ENCODE measurements at regions of chr15 and their contacts with region 1.

Region 1: DNA sequence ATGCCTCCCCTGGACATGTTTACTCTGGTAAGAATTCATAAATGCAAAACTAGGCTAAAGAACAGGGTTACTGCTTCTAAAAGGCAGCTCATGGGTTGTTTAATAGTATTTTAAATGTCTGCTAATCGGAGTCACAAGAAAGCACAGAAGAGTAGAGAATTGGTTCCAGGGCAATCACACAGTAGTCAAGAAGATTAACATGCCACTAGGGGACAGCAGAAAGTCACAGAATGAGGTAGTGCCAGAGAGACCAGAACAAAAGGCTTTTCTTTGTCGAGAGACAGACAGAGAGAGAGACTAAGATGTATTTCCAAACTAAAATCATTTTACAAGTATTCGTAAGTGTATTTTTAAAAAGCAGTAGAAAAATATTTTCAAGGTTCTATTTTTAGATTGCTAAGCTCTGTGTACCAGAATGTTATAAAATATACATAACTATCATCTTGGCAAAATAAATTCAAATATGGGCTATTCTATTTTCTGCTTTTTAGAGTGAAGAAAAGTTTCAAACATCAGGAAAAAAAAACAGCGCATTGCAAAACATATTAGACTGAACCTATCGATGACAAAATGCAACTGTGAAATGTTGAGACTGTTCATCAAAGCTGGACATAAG is 78.3 kb upstream of the CDIN1 start:
- DNase-seq: peak; percentile 55 to 60
- H3K4me3 ChIP-seq: no peak overlapping the region
- H3K4me3 Mint-ChIP-seq: no peak overlapping the region
- H3K27ac Mint-ChIP-seq: no peak overlapping the region
- H3K4me1 ChIP-seq: peaks cover 27% of the 10 kb centered on the region
- H3K4me1 Mint-ChIP-seq: no peaks in the 10 kb centered on the region
- H3K27me3 ChIP-seq: no peaks in the 10 kb centered on the region
- H3K27me3 Mint-ChIP-seq: no peaks in the 10 kb centered on the region
- CTCF ChIP-seq: peak; percentile 66 to 86

Region 2: GRCh38 chr15:35519541-35520149 is 981.5 kb before region 1 on chr15:
- CTCF ChIA-PET with region 1: no interaction called
- POLR2A ChIA-PET with region 1: no interaction called
- intact Hi-C with region 1: loop called (anchors 2 kb)
- DNase-seq: peak in 1 of 2 experiments; percentile 25
- H3K4me3 ChIP-seq: no peak overlapping the region
- H3K4me3 Mint-ChIP-seq: no peak overlapping the region
- H3K27ac Mint-ChIP-seq: no peak overlapping the region
- H3K4me1 ChIP-seq: no peaks in the 10 kb centered on the region; the same call in 1 of the 2 replicates
- H3K4me1 Mint-ChIP-seq: peaks cover 9% of the 10 kb centered on the region
- H3K27me3 ChIP-seq: no peaks in the 10 kb centered on the region
- H3K27me3 Mint-ChIP-seq: no peaks in the 10 kb centered on the region
- CTCF ChIP-seq: peak; percentile 30 to 58

Region 3: DNA sequence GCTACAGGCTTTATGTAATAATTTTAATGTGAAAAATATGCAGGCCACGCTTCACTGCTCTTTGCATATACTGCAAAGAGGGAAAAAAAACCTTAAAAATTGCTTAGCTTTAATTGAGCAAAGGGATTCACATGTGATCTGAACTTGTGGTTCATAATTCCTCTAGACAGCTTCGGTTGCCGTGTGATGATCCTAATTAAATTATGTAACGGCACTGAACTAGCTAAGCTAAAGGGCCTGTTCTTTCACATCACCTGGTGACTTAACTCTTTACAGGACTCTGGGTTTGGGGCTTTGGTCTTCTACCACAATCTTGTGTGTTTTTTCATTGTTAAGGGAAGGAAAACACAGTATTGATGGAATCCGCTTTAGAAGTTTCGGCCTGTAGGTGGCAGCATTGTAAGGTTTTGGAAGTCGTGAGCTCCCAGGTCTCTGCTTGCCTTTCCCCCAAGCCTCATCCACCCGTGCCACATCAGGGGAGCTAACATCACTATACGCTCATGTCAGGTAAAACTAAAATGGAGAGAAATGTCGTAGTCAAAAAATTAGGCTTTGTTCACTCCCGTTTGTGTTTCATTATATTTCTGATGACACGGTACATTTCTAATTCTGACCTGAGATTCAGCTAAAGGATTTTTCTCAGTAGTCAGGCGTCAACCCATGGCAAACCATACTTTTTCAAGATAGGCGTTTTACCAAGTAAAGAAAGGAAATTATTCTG is 749.6 kb before region 1 on chr15:
- CTCF ChIA-PET with region 1: no interaction called
- POLR2A ChIA-PET with region 1: no interaction called
- intact Hi-C with region 1: loop called (anchors 10 kb)
- DNase-seq: peak; percentile 64
- H3K4me3 ChIP-seq: no peak overlapping the region
- H3K4me3 Mint-ChIP-seq: peak overlapping the region; percentile 16
- H3K27ac Mint-ChIP-seq: no peak overlapping the region
- H3K4me1 ChIP-seq: no peaks in the 10 kb centered on the region
- H3K4me1 Mint-ChIP-seq: no peaks in the 10 kb centered on the region
- H3K27me3 ChIP-seq: no peaks in the 10 kb centered on the region
- H3K27me3 Mint-ChIP-seq: no peaks in the 10 kb centered on the region
- CTCF ChIP-seq: peak; percentile 68 to 76

Region 4: DNA sequence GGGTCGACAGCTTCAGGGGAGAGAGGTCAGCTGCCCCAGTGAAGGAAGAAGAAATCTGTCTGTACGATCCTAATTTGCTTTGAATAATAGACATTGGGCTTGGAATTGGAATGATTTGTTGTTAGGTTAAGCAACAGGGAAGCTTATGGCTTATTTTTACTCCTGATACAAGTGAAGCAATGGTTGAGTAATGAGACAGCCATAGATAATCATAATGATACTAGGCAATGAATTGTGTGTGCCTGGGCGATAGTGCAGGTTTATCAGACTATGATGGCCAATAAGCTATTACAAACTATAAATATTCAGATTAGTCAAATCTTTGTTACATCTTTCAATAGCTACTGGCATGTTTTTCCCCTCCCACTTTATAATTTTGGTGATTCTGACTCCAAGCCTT is 62.7 kb before region 1 on chr15:
- CTCF ChIA-PET with region 1: no interaction called
- POLR2A ChIA-PET with region 1: no interaction called
- intact Hi-C with region 1: no loop called
- DNase-seq: no peak
- H3K4me3 ChIP-seq: no peak overlapping the region
- H3K4me3 Mint-ChIP-seq: no peak overlapping the region
- H3K27ac Mint-ChIP-seq: no peak overlapping the region
- H3K4me1 ChIP-seq: no peaks in the 10 kb centered on the region
- H3K4me1 Mint-ChIP-seq: no peaks in the 10 kb centered on the region
- H3K27me3 ChIP-seq: no peaks in the 10 kb centered on the region
- H3K27me3 Mint-ChIP-seq: peaks cover 2% of the 10 kb centered on the region
- CTCF ChIP-seq: no peak

Region 5: DNA sequence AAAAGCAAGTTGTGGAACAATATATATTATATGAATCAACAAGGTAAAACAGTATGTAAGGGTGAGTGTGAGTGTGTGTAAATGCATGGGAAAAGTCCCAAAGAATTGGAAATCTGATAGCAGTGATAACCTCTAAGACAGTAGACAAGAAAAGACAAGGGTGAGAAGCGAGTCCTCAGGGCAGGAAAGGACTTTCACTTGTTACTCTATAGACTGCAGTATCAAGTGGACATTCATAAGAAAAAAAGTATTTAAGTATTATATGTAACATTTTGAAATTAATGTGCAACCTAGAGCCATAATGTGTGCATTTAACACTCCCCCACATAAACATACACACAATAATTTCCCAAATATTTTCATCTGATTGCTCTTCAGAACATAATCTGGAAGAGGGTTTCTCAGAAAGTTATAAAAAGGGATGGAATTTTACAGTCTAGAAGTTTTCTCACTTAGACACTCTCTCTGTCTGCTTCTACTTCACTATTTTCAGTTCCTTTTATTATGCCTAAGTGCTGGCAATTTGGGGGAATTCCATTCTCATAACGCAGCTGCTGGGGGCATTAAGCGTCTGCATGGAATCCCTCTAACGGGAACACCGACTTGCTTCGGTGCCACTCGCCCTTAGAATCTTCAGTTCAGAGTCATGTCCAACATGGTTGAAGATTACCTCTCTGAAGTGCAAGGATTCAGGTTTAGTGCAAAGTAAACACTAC is 28.3 kb after region 1 on chr15:
- CTCF ChIA-PET with region 1: no interaction called
- POLR2A ChIA-PET with region 1: no interaction called
- intact Hi-C with region 1: no loop called
- DNase-seq: no peak
- H3K4me3 ChIP-seq: no peak overlapping the region
- H3K4me3 Mint-ChIP-seq: no peak overlapping the region
- H3K27ac Mint-ChIP-seq: no peak overlapping the region
- H3K4me1 ChIP-seq: no peaks in the 10 kb centered on the region
- H3K4me1 Mint-ChIP-seq: no peaks in the 10 kb centered on the region
- H3K27me3 ChIP-seq: no peaks in the 10 kb centered on the region
- H3K27me3 Mint-ChIP-seq: no peaks in the 10 kb centered on the region
- CTCF ChIP-seq: no peak

Region 6: GRCh38 chr15:36571301-36571700 is 70.1 kb after region 1 on chr15:
- CTCF ChIA-PET with region 1: no interaction called
- POLR2A ChIA-PET with region 1: no interaction called
- intact Hi-C with region 1: no loop called
- DNase-seq: no peak
- H3K4me3 ChIP-seq: no peak overlapping the region
- H3K4me3 Mint-ChIP-seq: no peak overlapping the region
- H3K27ac Mint-ChIP-seq: no peak overlapping the region
- H3K4me1 ChIP-seq: peaks cover 5% of the 10 kb centered on the region; the same call in 1 of the 2 replicates
- H3K4me1 Mint-ChIP-seq: no peaks in the 10 kb centered on the region
- H3K27me3 ChIP-seq: no peaks in the 10 kb centered on the region
- H3K27me3 Mint-ChIP-seq: peaks cover 6% of the 10 kb centered on the region
- CTCF ChIP-seq: no peak

Region 7: GRCh38 chr15:37134699-37135131 is 633.5 kb after region 1 on chr15:
- CTCF ChIA-PET with region 1: no interaction called
- POLR2A ChIA-PET with region 1: no interaction called
- intact Hi-C with region 1: loop called (anchors 1 kb)
- DNase-seq: peak in 1 of 2 experiments; percentile 43
- H3K4me3 ChIP-seq: no peak overlapping the region
- H3K4me3 Mint-ChIP-seq: no peak overlapping the region
- H3K27ac Mint-ChIP-seq: no peak overlapping the region
- H3K4me1 ChIP-seq: peaks cover 12% of the 10 kb centered on the region; the same call in 1 of the 2 replicates
- H3K4me1 Mint-ChIP-seq: peaks cover 15% of the 10 kb centered on the region
- H3K27me3 ChIP-seq: no peaks in the 10 kb centered on the region
- H3K27me3 Mint-ChIP-seq: no peaks in the 10 kb centered on the region
- CTCF ChIP-seq: peak; percentile 51 to 67